Left ventricle myocardium superior (tissue), 1 donor: ENCODE measurements at regions of chr17 and their contacts with region 1.

Region 1: DNA sequence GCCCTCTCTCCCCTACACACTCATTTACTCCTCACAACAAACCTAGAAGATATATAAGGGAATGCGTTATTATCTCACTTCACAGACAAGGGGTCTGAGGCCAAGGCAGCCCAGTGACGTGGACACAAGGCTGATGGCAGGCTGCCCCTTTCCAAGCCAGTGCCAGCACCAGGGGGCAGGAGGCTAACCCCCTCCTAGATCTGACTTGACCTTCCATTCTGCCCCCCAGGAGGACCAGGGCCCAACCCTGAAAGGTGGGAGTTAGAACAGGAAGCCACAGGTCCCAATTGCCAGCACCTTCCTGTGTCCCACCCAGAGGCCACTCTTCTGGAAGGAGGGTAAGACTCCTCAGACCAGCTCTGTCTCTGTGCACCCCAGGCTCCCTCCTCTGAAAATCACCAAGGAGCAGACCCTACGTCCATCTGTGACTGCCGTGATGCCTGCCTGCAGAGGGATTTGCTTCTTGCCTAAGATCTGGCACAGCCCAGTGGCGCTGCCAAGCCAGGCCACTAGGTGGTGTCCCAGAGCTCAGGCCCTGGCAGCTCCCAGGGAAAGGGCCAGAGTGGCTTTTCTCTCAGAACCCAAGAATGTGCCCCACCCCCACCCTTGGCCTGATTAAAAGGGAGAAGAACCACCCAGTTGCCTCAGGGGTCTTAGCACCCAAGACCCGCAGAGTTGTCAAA is 42.4 kb upstream of the MRPS23 start:
- DNase-seq: peak; percentile 93
- ATAC-seq: peak; percentile 50

Region 2: DNA sequence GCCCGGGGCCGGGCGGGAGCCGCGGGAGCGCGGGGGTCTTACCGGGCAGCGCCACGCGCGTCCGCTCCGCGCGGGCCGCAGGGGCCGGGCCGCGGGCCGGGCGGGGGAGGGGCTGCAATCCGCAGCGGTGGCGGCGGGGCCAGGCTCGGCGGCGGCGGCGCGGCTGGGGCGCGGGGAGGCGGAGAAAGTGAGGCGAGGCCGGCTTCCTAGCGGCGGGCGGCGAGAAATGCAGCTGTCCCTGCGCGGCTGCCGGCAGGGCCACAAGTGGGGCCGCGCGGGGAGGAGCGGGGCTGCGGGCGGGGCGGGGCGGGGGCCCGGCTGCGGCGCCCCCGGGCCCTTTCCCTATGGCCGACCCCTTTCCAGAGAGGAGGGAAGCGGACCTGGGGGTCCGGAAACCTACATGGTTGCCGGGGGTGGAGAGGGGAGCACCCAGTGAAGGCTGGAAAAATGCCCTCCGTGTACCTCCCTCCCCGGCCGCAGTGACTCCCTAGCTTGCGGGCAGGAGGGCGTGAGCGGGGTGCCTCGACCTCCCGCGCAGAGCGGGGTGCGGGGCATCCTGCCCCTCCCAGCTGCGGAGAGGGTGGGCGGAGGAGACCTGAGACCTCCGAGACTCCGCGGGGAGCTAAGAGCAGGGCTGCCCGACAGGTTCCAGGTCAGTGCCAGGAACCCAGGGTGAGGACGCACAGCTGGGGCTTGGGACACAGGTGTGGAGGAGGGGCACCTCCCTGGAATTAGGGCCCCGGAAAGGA is 63.1 kb after region 1 on chr17 and contains the start of gene CUEDC1:
- intact Hi-C with region 1: loop called (anchors 10 kb)
- DNase-seq: peak; percentile 93
- ATAC-seq: peak; percentile 76
- total RNA-seq, gene CUEDC1: 55.0 TPM

Region 3: GRCh38 chr17:57995076-57995956 is 103.0 kb after region 1 on chr17:
- intact Hi-C with region 1: loop called (anchors 10 kb)
- DNase-seq: peak; percentile 58
- ATAC-seq: peak; percentile 90